ENCODE measurements at regions of chr14 and their contacts with region 1.

Region 1: DNA sequence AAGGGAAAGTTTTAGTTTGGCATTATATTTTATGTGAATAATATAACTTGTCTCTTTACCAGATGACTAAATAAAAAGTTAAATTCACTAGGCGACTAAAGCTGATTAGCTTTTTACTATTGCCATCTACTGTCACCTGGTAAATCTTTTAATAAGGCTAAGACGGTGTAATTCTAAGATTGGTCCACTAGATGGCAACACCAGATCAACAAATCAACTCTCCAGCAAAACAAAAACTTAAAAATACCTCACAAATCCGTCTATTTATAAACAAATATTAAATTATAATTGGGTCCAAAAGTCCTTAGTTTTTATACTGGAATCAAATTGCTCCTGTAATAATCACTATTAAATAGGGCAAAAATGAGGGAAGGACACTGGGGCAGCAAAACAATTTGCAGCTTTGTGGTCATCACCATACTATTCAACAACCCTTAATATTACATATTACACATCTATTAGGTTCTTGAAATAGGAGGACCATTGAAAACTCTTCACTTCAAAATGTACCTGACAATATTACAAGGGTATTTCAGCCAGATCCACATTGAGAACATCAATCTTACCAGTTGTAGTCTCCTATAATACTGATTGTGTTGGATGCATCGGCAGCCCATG is 47.9 kb downstream of the GALC start:
- DNase-seq: peak in 1 of 2 donors; percentile 83
- ATAC-seq: peak; percentile 79 to 85 (median 80)
- H3K4me3 ChIP-seq: no peak overlapping the region
- H3K4me3 Mint-ChIP-seq: no peak overlapping the region
- H3K27ac ChIP-seq: no peak overlapping the region
- H3K27ac Mint-ChIP-seq: peak overlapping the region; percentile 69 to 72
- H3K4me1 ChIP-seq: peaks cover 15% of the 10 kb centered on the region
- H3K4me1 Mint-ChIP-seq: peaks cover 32 to 35% of the 10 kb centered on the region in 2 donors
- H3K27me3 ChIP-seq: no peaks in the 10 kb centered on the region
- H3K27me3 Mint-ChIP-seq: no peaks in the 10 kb centered on the region
- CTCF ChIP-seq: peak; percentile 91

Region 2: DNA sequence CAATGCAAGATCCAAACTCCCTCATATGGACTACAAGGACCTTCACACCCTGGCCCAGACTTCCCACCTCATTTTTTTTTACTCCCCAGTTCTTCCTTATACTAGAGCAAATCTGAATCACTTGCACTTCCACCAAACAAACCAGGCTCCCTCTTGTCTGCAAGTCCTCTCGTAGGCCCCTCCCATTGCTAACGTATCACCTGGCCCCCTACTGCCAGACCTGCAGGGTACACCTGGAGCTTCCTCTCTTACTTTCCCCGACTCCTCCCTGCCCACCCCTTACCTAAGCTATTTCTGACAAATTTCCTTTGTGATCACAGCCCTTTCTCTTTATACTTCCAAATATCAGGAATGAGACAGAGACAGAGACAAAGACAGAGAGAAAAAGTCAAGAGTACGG is 416.0 kb before region 1 on chr14:
- intact Hi-C with region 1: no loop called
- DNase-seq: no peak
- ATAC-seq: no peak
- H3K4me3 ChIP-seq: no peak overlapping the region
- H3K4me3 Mint-ChIP-seq: no peak overlapping the region
- H3K27ac ChIP-seq: no peak overlapping the region
- H3K27ac Mint-ChIP-seq: no peak overlapping the region
- H3K4me1 ChIP-seq: no peaks in the 10 kb centered on the region
- H3K4me1 Mint-ChIP-seq: no peaks in the 10 kb centered on the region
- H3K27me3 ChIP-seq: no peaks in the 10 kb centered on the region
- H3K27me3 Mint-ChIP-seq: no peaks in the 10 kb centered on the region
- CTCF ChIP-seq: no peak

Region 3: DNA sequence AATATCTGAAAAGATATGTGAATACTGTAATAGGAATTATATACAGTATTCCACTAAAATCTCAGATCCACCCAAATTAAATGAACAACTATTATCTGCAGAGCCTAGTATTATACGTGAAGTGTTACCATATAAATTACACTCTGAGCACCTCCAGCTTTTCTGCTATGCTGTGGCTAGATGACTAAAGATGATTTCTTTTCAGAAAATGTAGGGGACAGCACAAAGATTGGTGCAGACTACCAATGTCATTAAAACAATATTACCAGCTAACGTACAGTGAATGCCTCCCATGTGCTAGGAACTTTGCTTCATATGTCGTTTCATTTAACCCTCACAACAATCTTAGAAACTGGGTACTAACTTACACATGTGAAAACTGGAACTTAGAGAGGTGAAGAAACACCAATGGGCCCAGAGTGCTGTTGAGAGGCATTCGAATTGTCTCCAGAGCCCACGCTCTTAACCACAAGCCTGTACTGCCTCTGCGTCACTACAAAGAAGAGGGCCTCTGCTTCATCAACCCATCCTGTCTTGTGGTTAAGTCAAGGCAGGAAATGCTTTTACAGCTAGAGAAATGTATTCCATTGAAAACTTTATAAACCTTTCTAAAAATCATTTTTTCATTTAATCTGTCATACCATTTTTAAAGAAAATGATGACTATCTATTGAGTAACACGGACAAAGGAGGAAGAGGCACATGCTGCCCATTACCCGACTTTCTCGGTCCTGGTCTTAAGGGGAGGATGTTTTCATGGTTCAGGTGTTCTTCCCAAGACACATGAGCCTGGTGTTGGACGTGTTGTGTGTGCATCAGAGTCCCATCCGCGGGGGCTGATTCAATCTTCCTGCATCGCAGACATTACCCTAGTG is 61.1 kb after region 1 on chr14:
- intact Hi-C with region 1: loop called (anchors 2 kb)
- DNase-seq: peak; percentile 57 to 92
- ATAC-seq: peak; percentile 79 to 92 (median 90)
- H3K4me3 ChIP-seq: peak overlapping the region; percentile 78
- H3K4me3 Mint-ChIP-seq: peak overlapping the region; percentile 84
- H3K27ac ChIP-seq: peak overlapping the region; percentile 99
- H3K27ac Mint-ChIP-seq: peak overlapping the region; percentile 96 to 98
- H3K4me1 ChIP-seq: peaks cover 33% of the 10 kb centered on the region
- H3K4me1 Mint-ChIP-seq: peaks cover 68 to 74% of the 10 kb centered on the region in 2 donors
- H3K27me3 ChIP-seq: no peaks in the 10 kb centered on the region
- H3K27me3 Mint-ChIP-seq: no peaks in the 10 kb centered on the region
- CTCF ChIP-seq: no peak

Region 4: GRCh38 chr14:88168498-88169165 is 223.5 kb after region 1 on chr14:
- intact Hi-C with region 1: loop called (anchors 1 kb)
- DNase-seq: peak; percentile 46 to 83
- ATAC-seq: peak; percentile 84 to 93 (median 85)
- H3K4me3 ChIP-seq: no peak overlapping the region
- H3K4me3 Mint-ChIP-seq: peak overlapping the region; percentile 14
- H3K27ac ChIP-seq: no peak overlapping the region
- H3K27ac Mint-ChIP-seq: peak overlapping the region in 1 of 2 donors; percentile 25
- H3K4me1 ChIP-seq: peaks cover 26% of the 10 kb centered on the region
- H3K4me1 Mint-ChIP-seq: peaks cover 29 to 34% of the 10 kb centered on the region in 2 donors
- H3K27me3 ChIP-seq: peaks cover 7% of the 10 kb centered on the region
- H3K27me3 Mint-ChIP-seq: peaks cover 13 to 38% of the 10 kb centered on the region in 2 donors
- CTCF ChIP-seq: peak; percentile 72

Region 5: DNA sequence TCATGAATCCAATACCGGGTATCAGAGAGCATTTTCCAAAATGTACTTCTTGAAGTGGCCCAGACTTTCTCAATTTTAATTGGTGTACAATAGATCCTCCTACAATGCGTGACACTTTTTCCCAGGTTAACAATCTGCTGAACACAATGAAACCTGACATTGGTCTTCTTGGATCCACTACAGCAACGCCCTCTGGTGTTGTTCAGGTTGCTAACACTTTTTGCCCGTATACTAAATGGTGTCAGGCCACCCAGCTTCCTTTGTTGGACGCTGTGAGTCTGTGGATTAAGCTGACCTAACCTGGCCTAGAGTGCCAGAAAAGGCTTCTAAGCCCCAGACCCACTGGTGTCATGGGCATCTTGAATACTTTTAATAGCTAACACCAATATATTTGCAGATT is 288.8 kb after region 1 on chr14:
- intact Hi-C with region 1: loop called (anchors 1 kb)
- DNase-seq: peak in 1 of 2 donors; percentile 11
- ATAC-seq: no peak
- H3K4me3 ChIP-seq: no peak overlapping the region
- H3K4me3 Mint-ChIP-seq: no peak overlapping the region
- H3K27ac ChIP-seq: no peak overlapping the region
- H3K27ac Mint-ChIP-seq: no peak overlapping the region
- H3K4me1 ChIP-seq: no peaks in the 10 kb centered on the region
- H3K4me1 Mint-ChIP-seq: no peaks in the 10 kb centered on the region
- H3K27me3 ChIP-seq: no peaks in the 10 kb centered on the region
- H3K27me3 Mint-ChIP-seq: peaks cover 8 to 23% of the 10 kb centered on the region in 2 donors
- CTCF ChIP-seq: no peak

Region 6: DNA sequence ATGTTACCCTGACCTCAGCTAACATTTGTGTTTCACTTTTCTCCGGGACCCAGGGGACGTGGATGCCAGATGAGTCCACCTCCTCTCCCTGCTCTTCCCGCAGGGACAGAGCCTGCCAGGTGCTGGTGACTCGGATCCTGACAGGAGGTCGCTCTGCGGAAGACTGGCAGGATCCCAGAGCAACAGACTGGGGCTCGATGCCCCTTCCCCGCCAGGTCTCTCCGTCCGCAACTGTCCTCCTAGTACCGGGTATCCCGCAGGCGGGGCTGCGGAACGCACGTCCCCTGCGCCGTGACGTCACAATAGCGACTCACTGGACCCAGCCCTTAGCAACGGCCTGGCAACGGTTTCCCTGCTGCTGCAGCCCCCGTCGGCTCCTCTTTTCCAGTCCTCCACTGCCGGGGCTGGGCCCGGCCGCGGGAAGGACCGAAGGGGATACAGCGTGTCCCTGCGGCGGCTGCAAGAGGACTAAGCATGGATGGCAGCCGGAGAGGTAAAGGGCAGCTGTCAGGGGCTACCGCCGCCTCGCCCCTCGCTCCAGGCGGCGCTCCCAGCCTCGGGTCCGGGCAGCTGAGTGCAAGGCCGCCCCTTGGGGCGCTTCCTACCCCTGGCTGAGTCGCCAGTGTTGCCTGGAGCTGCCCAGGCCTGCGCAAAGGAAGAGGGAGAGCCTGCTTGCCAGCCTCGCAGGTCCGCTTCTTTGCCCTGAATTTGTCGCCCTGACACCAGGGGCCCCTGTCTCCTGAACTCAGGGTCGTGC is 440.4 kb after region 1 on chr14 and contains the start of gene SPATA7:
- intact Hi-C with region 1: loop called (anchors 10 kb)
- DNase-seq: peak; percentile 74 to 86
- ATAC-seq: peak; percentile 92 to 98 (median 95)
- H3K4me3 ChIP-seq: peak within 1 kb of the TSS; percentile 96
- H3K4me3 Mint-ChIP-seq: peak within 1 kb of the TSS; percentile 94
- H3K27ac ChIP-seq: peak within 1 kb of the TSS; percentile 69
- H3K27ac Mint-ChIP-seq: peak within 1 kb of the TSS; percentile 80 to 95
- H3K4me1 ChIP-seq: peaks cover 11% of the 10 kb centered on the region
- H3K4me1 Mint-ChIP-seq: peaks cover 11 to 19% of the 10 kb centered on the region in 2 donors
- H3K27me3 ChIP-seq: no peaks in the 10 kb centered on the region
- H3K27me3 Mint-ChIP-seq: no peaks in the 10 kb centered on the region
- CTCF ChIP-seq: no peak
- total RNA-seq, gene SPATA7: 2.5 to 3.2 (median 2.8) TPM

Region 7: DNA sequence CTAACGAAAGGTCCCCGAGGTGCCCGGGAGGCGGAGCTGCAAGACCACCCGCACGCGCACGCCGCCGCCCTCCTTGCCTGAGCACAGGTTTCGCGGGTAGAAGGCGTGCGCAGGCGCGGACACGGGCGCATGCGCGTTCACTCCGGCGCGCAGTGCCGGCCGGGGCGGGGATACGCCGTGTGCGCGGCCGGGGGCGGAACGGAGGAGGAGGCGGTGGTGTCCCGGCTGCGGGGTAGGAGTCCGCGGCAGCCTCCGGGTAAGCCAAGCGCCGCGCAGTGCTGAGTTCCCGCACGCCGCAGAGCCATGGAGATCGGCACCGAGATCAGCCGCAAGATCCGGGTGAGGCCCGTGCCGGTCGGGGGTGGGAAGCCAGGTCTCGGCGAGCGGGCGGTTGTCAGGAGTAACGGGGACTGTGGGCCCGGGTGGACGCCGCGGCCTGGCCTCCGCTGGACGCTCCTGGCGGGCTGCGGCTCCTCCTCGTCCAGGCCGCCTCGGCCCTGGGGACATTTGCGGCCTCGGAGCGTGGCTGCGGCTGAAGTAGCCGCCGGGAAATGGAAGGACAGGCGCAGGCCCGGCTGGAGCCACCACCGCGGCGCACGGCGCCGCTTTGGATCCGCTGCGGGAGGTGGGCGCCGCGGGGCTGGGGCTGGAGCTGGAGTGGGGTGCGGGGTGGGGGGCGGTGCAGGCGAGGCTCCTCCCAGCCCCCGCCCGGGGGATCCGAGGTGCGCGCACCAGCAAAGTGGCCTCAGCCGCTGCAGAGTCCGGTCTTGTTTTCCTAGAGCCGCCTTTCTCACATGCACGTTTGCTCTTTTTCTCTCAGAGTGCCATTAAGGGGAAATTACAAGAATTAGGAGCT is 618.0 kb after region 1 on chr14 and contains the start of gene ZC3H14:
- intact Hi-C with region 1: loop called (anchors 10 kb)
- DNase-seq: peak; percentile 84 to 95
- ATAC-seq: peak; percentile 95 to 97 (median 96)
- H3K4me3 ChIP-seq: peak within 1 kb of the TSS; percentile 86
- H3K4me3 Mint-ChIP-seq: peak within 1 kb of the TSS; percentile 91
- H3K27ac ChIP-seq: peak within 1 kb of the TSS; percentile 51
- H3K27ac Mint-ChIP-seq: peak within 1 kb of the TSS; percentile 74 to 91
- H3K4me1 ChIP-seq: peaks cover 12% of the 10 kb centered on the region
- H3K4me1 Mint-ChIP-seq: peaks cover 22 to 23% of the 10 kb centered on the region in 2 donors
- H3K27me3 ChIP-seq: no peaks in the 10 kb centered on the region
- H3K27me3 Mint-ChIP-seq: peaks cover 12 to 13% of the 10 kb centered on the region in 2 donors
- CTCF ChIP-seq: no peak
- total RNA-seq, gene ZC3H14: 44.1 to 54.5 (median 53.4) TPM

Measured in natural killer cell (primary cell).